SK-N-SH (cell line): ENCODE measurements at regions of chr6 and their contacts with region 1.

Region 1: DNA sequence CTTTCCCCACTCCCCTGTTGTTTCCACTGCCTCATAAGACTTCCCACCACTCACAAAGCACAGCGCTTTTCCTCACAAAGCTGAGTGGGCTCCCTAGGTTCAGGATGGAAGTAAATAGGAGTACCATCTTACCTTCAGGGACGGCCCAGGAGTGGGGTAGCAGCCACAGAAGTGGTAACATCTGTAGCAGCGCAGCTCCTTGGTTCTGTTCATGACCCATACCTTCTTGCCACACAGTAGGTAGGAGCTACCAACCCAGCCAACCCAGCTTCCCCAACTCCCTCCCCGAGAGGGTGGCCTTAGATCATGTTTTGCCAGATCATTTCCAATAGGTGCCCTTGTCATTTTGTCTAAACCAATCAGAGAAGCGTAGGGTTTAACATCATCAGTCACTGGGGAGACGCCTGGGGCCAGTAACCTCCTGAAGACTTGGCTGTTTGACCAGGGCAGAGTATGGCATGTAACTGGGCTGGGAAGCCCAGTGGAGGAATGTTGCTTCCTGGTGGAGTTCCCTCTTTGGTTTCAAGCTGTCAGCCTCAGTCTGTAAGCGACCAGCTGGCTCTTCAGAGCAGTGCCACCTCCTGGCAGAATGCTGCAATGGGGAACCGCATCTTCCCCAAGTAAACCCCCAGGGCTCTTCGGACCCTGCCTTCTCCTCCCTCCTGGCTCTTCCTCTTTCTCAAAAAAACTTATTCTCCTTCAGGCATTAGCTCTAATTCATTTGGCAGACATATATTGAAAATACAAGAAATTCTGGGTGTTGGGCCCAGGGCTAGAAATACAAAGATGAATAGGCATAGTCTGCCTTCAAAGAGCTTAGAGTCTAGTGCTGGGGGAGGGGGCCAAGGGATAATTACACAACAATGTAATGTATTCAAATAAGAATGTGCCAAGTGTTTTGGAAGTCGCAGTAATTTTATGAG is at the start of gene HLA-DMA:
- DNase-seq: peak; percentile 42
- H3K4me3 ChIP-seq: peak within 1 kb of the TSS in 1 of 2 experiments; percentile 27; a peak in 1 of 4 replicates
- H3K27ac ChIP-seq: no peak within 1 kb of the TSS
- H3K4me1 ChIP-seq: peaks cover 0 to 6% of the 10 kb centered on the region in 2 experiments; a peak in 1 of 4 replicates
- H3K27me3 ChIP-seq: no peaks in the 10 kb centered on the region
- CTCF ChIP-seq: peak; percentile 77
- EP300 ChIP-seq: no peak
- RAD21 ChIP-seq: peak; percentile 47
- polyA plus RNA-seq, gene HLA-DMA: 1.2 and 1.5 TPM in 2 replicates

Region 2: GRCh38 chr6:32519118-32519909 is 433.8 kb before region 1 on chr6:
- CTCF ChIA-PET with region 1: no interaction called
- POLR2A ChIA-PET with region 1: no interaction called
- DNase-seq: no peak
- H3K4me3 ChIP-seq: no peak overlapping the region
- H3K27ac ChIP-seq: no peak overlapping the region
- H3K4me1 ChIP-seq: no peaks in the 10 kb centered on the region
- H3K27me3 ChIP-seq: no peaks in the 10 kb centered on the region
- CTCF ChIP-seq: no peak
- EP300 ChIP-seq: no peak
- RAD21 ChIP-seq: no peak

Region 3: GRCh38 chr6:32816746-32817204 is 136.3 kb before region 1 on chr6 and contains the start of gene HLA-DOB:
- CTCF ChIA-PET with region 1: no interaction called
- POLR2A ChIA-PET with region 1: no interaction called
- DNase-seq: no peak
- H3K4me3 ChIP-seq: no peak within 1 kb of the TSS
- H3K27ac ChIP-seq: no peak within 1 kb of the TSS
- H3K4me1 ChIP-seq: no peaks in the 10 kb centered on the region
- H3K27me3 ChIP-seq: peaks cover 40% of the 10 kb centered on the region
- CTCF ChIP-seq: no peak
- EP300 ChIP-seq: no peak
- RAD21 ChIP-seq: no peak
- polyA plus RNA-seq, gene HLA-DOB: not detected in 2 replicates

Region 4: DNA sequence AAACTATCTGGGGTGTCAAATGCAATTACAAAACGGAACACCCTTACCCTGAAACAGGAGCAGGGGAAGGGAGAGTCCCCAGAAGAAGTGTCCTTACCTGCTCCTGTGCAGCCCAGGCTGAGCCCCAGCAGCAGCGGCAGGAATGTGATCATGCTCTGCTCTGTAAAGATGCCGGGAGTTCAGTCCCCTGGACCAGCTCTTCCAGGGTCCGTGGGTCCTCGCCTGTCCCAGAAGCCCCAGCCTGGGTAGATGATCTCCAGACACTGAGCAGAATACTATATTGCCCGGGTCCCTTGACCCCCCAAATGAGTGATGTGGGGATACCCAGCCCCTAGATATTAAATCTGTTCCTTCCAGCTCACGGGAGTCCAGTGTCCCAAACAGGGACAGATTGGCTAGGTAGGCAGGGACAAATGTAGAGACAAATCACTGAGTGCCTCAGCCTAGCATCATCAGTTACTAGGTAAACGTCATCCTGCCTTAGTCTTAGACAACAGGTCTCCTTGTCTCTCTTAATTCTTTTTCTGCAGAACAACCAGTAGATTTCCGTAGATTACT is 12.3 kb before region 1 on chr6 and contains the start of gene HLA-DMB:
- CTCF ChIA-PET with region 1: interaction called, 187 read pairs
- POLR2A ChIA-PET with region 1: no interaction called
- DNase-seq: peak; percentile 53
- H3K4me3 ChIP-seq: peak within 1 kb of the TSS; percentile 36 to 42; a peak in 3 of 4 replicates
- H3K27ac ChIP-seq: no peak within 1 kb of the TSS
- H3K4me1 ChIP-seq: peaks cover 0 to 3% of the 10 kb centered on the region in 2 experiments; a peak in 1 of 4 replicates
- H3K27me3 ChIP-seq: peaks cover 51% of the 10 kb centered on the region; the same call in 1 of the 2 replicates
- CTCF ChIP-seq: no peak
- EP300 ChIP-seq: no peak
- RAD21 ChIP-seq: no peak
- polyA plus RNA-seq, gene HLA-DMB: 0.10 TPM in 1 of 2 replicates, not detected in the other

Region 5: GRCh38 chr6:32964776-32965175 is 11.7 kb after region 1 on chr6:
- CTCF ChIA-PET with region 1: interaction called, 86 read pairs
- POLR2A ChIA-PET with region 1: no interaction called
- DNase-seq: no peak
- H3K4me3 ChIP-seq: no peak overlapping the region
- H3K27ac ChIP-seq: no peak overlapping the region
- H3K4me1 ChIP-seq: peaks cover 6% of the 10 kb centered on the region in 2 experiments; a peak in 3 of 4 replicates
- H3K27me3 ChIP-seq: no peaks in the 10 kb centered on the region
- CTCF ChIP-seq: no peak
- EP300 ChIP-seq: no peak
- RAD21 ChIP-seq: no peak